Activated T-helper 1 cell treated with anti-CD3 and anti-CD28 coated beads, Interleukin-12 subunit alpha, Interleukin-12 subunit beta, Interleukin-2, Interleukin-4 antibody, amounts not matched to agents 30 ng/mL and 10 ng/mL and 1 ng/mL, durations not matched to agents 14 hours and 24 hours and 36 hours (primary cell): ENCODE measurements at regions of chr5 and their contacts with region 1.

Region 1: DNA sequence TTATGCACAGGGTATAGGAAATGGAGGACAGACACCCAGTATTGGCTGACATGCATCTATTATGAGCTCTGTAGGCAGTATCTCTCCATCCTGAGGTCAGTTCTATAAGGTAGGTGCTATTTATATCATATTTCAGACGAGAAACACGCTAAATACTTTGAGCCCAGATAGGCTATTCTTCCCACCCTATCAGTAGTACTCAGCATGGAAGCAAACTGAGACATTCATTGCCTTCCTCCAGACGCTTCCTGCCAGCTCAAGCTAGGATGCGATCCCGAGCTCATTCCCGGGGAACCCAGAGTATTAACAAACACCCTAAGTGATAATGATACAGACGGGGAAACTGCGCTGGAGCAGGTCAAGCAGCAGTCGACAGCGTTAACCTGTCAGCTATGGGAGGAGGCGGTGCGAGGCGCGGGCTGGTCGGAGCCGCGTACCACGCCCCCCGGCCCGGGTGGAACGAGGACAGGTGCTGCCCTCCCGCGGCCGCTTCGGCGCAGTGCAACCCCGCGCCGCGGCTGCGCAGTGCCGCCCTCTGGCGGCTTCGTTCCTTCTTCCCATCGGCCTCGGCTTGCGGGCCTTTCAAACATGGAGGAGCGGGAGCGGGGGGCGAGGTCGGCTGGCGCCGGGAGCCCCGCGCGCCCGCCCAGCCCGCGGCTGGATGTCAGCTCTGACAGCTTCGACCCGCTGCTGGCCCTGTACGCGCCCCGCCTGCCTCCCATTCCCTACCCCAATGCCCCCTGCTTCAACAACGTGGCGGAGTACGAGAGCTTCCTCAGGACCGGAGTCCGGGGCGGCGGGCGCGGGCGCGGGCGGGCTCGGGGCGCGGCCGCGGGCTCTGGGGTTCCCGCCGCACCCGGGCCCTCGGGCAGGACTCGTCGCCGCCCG is at the start of gene LSM11:
- DNase-seq: peak; percentile 90
- H3K4me3 Mint-ChIP-seq: peak within 1 kb of the TSS; percentile 98
- H3K27ac Mint-ChIP-seq: peak within 1 kb of the TSS; percentile 93
- H3K4me1 Mint-ChIP-seq: peaks cover 46% of the 10 kb centered on the region
- H3K27me3 Mint-ChIP-seq: peaks cover 3% of the 10 kb centered on the region
- total RNA-seq, gene LSM11: 8.8 and 9.0 TPM in 2 replicates

Region 2: DNA sequence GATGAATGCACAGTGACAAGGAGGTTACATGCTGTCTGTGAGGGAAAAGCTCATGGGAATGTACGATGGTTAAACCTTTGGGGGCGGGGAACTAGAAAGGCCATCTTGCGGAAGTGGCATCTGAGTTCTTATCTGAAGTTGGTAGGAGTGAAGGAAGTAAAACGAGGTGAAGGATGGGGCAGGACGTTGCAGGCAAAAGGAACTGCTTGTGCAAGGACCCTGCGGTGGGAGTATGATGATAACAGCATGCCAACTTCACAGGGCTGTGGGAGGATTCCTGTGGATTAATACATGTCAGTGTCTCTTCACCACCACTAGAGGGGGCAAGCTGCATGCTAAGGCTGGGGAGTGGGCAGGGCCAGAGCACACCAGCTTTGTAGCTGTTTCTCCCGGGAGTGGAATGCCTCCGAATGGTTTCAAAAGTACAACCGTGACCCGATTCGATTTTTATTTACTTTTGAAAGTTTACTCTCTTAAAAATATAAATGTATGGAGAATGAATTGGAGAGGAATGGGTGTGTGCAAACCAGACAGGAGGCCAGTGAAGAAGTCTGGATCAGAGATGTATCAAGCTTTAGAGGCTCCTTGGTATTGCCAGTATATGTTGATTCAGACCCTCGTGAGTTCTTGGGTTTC is 415.0 kb before region 1 on chr5:
- intact Hi-C with region 1: loop called (anchors 1 kb)
- DNase-seq: peak; percentile 46
- H3K4me3 Mint-ChIP-seq: peak overlapping the region; percentile 0
- H3K27ac Mint-ChIP-seq: peak overlapping the region; percentile 83
- H3K4me1 Mint-ChIP-seq: peaks cover 49% of the 10 kb centered on the region
- H3K27me3 Mint-ChIP-seq: no peaks in the 10 kb centered on the region

Region 3: GRCh38 chr5:157431544-157432200 is 311.7 kb before region 1 on chr5:
- intact Hi-C with region 1: loop called (anchors 1 kb)
- DNase-seq: peak; percentile 7
- H3K4me3 Mint-ChIP-seq: no peak overlapping the region
- H3K27ac Mint-ChIP-seq: no peak overlapping the region
- H3K4me1 Mint-ChIP-seq: peaks cover 8% of the 10 kb centered on the region
- H3K27me3 Mint-ChIP-seq: peaks cover 22% of the 10 kb centered on the region

Region 4: GRCh38 chr5:157575381-157576020 is 167.9 kb before region 1 on chr5 and contains the start of gene ADAM19:
- intact Hi-C with region 1: loop called (anchors 1 kb)
- DNase-seq: peak; percentile 58
- H3K4me3 Mint-ChIP-seq: peak within 1 kb of the TSS; percentile 96
- H3K27ac Mint-ChIP-seq: peak within 1 kb of the TSS; percentile 92
- H3K4me1 Mint-ChIP-seq: peaks cover 64% of the 10 kb centered on the region
- H3K27me3 Mint-ChIP-seq: no peaks in the 10 kb centered on the region
- total RNA-seq, gene ADAM19: 341 and 348 TPM in 2 replicates

Region 5: DNA sequence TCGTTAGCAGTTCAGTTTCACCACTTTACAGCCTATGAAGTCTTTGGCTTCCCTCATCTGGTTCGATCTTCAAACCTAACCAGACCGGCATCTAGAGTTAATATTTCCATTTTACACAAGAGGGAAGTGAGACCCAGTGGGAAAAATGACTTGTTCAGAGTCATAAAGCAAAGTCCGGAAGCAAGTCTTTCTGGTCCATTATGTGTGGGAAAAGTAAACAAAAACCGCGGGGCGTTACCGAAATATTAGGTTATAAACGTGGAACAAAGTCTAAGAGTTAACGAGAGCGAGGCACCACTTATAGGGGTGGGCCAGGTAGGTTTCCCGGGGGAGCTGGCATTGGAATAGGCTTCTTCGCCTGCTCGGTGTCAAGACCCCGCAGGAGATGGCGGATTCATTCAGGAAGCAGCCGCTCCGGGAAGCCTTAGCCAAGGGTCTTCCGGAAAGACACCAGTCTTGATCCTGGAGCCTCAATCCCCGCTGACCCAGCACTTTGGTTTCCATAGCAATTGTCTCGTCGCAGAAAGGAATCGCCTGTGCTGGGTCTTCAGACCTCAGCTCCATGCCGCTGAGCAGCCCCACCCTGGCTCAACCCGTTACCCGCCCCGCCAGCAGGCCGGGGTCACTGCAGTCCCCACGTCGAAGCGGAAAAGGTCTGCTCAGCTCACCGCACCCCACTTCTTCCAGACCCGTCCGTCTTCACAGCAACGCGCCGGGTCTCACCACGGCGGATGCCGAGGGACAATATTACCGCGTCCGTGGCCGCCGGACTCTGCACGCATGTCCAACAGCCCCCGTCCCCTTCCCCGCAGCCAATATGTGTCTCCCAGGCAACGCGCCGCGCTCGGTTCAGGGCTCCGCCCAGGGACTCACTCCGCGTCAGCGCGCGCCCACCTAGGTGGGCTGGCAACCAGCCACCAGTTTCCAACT is 72.5 kb before region 1 on chr5 and contains the start of gene C5orf52:
- intact Hi-C with region 1: loop called (anchors 1 kb)
- DNase-seq: no peak
- H3K4me3 Mint-ChIP-seq: peak within 1 kb of the TSS; percentile 93
- H3K27ac Mint-ChIP-seq: peak within 1 kb of the TSS; percentile 82
- H3K4me1 Mint-ChIP-seq: peaks cover 42% of the 10 kb centered on the region
- H3K27me3 Mint-ChIP-seq: peaks cover 2% of the 10 kb centered on the region
- total RNA-seq, gene C5orf52: 0.39 TPM in 1 of 2 replicates, not detected in the other